ENCODE measurements at regions of chr9 and their contacts with region 1.

Region 1: GRCh38 chr9:129177791-129178559 is at the start of gene IER5L:
- DNase-seq: peak; percentile 90
- H3K4me3 ChIP-seq: peak within 1 kb of the TSS; percentile 74 to 81 (median 79)
- H3K27ac ChIP-seq: no peak within 1 kb of the TSS
- H3K4me1 ChIP-seq: peaks cover 21% of the 10 kb centered on the region
- H3K27me3 ChIP-seq: no peaks in the 10 kb centered on the region
- CTCF ChIP-seq: no peak
- POLR2A ChIP-seq: peak; percentile 100
- total RNA-seq, gene IER5L: 12.3 and 13.3 TPM in 2 replicates

Region 2: DNA sequence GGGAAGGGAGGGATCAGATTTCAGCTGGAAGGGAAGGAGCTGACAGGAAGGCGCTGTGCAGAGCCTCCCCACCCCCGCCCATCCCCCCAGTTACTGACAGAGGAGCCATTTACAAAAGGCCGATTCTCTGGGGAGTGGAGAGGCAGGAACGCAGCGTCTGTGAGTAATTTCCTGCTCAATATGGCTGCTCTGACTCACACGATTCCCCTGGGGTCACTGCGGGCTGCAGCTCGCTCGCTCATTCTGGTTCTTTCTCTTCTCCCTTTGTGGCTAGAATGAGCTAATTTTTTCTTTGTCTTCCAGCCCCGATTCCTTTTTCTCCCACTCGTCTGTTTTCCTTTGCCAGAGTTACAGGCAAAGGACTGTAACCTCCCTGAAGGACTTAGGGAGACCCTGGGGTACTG is 38.0 kb before region 1 on chr9:
- CTCF ChIA-PET with region 1: interaction called, 287 read pairs
- POLR2A ChIA-PET with region 1: interaction called, 39 read pairs
- dilution Hi-C with region 1: no loop called
- intact Hi-C with region 1: loop called (anchors 1 kb)
- DNase-seq: peak; percentile 98
- H3K4me3 ChIP-seq: peak overlapping the region in 1 of 3 experiments; percentile 31
- H3K27ac ChIP-seq: peak overlapping the region; percentile 99
- H3K4me1 ChIP-seq: peaks cover 55% of the 10 kb centered on the region
- H3K27me3 ChIP-seq: no peaks in the 10 kb centered on the region
- CTCF ChIP-seq: no peak
- POLR2A ChIP-seq: peak; percentile 85

Region 3: DNA sequence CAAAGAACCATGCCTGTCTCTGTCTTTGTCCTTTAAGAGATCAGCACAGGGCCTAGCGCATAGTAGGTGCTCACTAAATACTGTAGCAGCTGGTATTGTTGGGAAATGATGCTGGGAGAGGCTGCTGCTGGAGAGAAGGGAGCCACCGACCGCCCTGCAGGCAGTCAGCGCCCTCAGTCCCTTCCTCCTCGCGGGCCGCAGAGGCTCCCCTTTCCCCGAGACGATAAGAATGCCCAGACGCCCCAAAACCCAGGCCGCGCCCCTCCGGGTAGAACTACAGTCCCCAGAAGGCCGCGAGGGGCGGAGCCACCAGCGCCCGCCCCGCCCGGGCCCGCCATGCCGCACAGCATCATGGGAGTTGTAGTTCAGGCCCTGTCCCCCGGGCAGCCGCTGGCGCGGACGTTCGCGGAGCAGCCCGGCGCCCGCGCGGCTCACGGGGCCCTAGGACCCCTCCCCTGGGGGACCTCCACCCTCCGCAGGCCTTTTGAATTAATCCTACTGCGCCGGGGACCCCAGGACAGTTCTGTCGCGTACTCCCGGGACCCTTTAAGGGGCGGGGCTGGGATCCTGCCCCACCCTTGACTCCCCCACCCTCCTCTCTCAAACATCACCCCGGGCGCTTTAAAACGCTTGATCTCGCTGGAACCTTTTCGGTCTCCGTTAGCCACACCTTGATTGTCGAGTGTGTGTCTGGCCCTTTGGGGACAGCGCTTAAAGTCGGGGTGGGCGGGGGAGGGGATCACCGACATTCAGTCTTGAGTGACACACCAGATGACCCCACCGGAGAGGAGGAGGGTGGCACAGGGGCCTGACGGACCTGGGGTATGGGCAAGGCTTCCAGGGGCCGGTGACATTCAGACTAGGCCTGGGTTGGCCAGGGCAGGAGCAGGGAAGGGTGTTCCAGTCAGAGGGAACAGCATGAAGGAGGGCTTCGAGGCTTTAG is 24.9 kb after region 1 on chr9:
- CTCF ChIA-PET with region 1: interaction called, 5 read pairs
- POLR2A ChIA-PET with region 1: interaction called, 12 read pairs
- dilution Hi-C with region 1: no loop called
- intact Hi-C with region 1: no loop called
- DNase-seq: peak; percentile 72
- H3K4me3 ChIP-seq: peak overlapping the region; percentile 59 to 81 (median 62)
- H3K27ac ChIP-seq: peak overlapping the region; percentile 71
- H3K4me1 ChIP-seq: peaks cover 6% of the 10 kb centered on the region
- H3K27me3 ChIP-seq: no peaks in the 10 kb centered on the region
- CTCF ChIP-seq: no peak
- POLR2A ChIP-seq: no peak

Region 4: DNA sequence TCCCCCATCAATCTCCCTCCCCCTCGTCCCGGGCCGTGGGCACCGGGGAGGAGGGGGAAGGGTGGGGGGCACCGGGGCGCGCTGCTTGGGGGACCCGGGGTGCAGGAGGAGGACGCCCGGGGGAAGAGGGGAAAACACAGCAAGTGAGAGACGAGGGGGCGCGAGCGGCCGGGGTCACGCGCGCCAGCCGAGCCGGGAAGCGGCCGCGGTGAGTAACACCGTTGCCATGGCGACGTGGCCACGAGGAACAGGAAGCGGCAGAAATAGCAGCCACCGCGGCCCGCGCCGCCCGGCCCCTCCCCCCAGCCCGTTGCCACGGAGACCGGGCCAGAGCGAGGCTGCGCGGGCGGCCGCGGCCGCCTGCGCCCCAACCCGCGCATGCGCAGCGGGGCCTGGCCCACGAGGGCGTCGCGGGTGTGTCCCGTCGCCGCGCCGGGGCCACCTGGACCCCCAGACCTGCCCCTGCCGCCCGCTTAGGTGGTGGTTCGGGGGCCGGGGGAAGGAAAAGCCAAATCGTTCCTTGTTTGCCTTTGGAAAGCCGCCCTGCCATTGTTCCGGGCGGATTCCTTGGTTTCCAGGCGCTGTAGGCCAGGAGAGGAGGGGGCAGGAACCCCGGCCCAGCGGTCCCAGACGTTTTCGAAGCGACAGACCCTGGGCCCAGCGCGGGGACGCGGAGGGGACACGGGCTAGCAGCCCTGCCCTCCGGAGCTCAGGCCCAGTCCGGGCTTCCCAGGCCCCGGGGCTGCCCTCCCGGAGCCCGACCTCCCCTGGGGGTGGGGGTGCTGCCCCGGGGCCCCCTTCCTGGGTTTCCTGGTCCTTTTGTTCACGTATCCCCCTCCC is 235.8 kb after region 1 on chr9:
- CTCF ChIA-PET with region 1: no interaction called
- POLR2A ChIA-PET with region 1: no interaction called
- dilution Hi-C with region 1: no loop called
- intact Hi-C with region 1: loop called (anchors 2 kb)
- DNase-seq: peak; percentile 95
- H3K4me3 ChIP-seq: peak overlapping the region in 1 of 3 experiments; percentile 35
- H3K27ac ChIP-seq: peak overlapping the region; percentile 96
- H3K4me1 ChIP-seq: peaks cover 15% of the 10 kb centered on the region
- H3K27me3 ChIP-seq: no peaks in the 10 kb centered on the region
- CTCF ChIP-seq: no peak
- POLR2A ChIP-seq: peak; percentile 70

Region 5: GRCh38 chr9:129495534-129496325 is 317.8 kb after region 1 on chr9:
- CTCF ChIA-PET with region 1: interaction called, 14 read pairs
- POLR2A ChIA-PET with region 1: interaction called, 24 read pairs
- dilution Hi-C with region 1: no loop called
- intact Hi-C with region 1: loop called (anchors 1 kb)
- DNase-seq: peak; percentile 85
- H3K4me3 ChIP-seq: peak overlapping the region in 2 of 3 experiments; percentile 26 to 37
- H3K27ac ChIP-seq: peak overlapping the region; percentile 72
- H3K4me1 ChIP-seq: peaks cover 31% of the 10 kb centered on the region
- H3K27me3 ChIP-seq: no peaks in the 10 kb centered on the region
- CTCF ChIP-seq: no peak
- POLR2A ChIP-seq: no peak

Region 6: DNA sequence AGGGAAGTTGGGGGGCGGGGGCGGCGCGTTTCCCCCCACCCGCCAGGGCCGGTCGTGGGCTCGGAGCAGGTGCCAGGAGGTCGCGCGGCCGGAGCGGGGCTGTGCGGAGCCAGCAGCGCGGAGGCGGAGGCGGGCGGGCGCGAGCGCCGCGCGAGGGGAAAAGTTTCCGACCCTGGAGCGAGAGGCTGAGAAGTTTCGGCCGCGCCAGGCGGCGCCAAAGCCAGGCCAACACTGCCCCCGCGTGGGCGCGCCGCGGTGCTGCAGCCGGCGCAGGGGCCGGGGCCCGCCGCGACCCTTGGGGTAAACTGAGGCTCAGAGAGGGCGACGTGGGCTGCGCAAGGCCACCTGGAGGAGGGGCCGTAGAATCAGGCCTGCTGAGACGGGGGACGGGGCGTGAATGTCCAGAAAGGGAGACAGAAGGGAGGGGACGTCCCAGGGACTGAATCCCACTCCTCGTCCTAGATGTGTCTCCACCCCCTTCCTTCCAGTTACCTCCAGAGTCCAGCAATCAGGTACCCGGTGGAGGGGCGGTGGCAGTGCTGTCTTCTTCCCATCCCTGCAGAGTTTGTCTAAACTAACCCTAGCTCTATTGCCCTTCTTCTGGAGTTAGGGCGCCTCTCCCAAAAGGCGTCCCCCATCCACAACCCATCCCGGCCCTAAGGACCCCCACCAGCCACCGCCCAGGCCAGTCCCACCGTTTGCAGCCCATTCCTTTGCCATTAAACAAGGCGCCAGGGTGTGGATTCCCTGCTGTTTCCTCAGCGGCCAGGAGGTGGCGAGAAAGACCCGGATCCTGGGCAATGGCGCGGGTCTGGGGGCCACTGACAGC is 432.7 kb after region 1 on chr9:
- CTCF ChIA-PET with region 1: interaction called, 18 read pairs
- POLR2A ChIA-PET with region 1: interaction called, 4 read pairs
- dilution Hi-C with region 1: no loop called
- intact Hi-C with region 1: loop called (anchors 1 kb)
- DNase-seq: peak; percentile 64
- H3K4me3 ChIP-seq: peak overlapping the region; percentile 24 to 56 (median 46)
- H3K27ac ChIP-seq: peak overlapping the region; percentile 16
- H3K4me1 ChIP-seq: peaks cover 14% of the 10 kb centered on the region
- H3K27me3 ChIP-seq: peaks cover 0 to 5% of the 10 kb centered on the region in 2 experiments
- CTCF ChIP-seq: peak; percentile 86 to 96
- POLR2A ChIP-seq: no peak

Region 7: DNA sequence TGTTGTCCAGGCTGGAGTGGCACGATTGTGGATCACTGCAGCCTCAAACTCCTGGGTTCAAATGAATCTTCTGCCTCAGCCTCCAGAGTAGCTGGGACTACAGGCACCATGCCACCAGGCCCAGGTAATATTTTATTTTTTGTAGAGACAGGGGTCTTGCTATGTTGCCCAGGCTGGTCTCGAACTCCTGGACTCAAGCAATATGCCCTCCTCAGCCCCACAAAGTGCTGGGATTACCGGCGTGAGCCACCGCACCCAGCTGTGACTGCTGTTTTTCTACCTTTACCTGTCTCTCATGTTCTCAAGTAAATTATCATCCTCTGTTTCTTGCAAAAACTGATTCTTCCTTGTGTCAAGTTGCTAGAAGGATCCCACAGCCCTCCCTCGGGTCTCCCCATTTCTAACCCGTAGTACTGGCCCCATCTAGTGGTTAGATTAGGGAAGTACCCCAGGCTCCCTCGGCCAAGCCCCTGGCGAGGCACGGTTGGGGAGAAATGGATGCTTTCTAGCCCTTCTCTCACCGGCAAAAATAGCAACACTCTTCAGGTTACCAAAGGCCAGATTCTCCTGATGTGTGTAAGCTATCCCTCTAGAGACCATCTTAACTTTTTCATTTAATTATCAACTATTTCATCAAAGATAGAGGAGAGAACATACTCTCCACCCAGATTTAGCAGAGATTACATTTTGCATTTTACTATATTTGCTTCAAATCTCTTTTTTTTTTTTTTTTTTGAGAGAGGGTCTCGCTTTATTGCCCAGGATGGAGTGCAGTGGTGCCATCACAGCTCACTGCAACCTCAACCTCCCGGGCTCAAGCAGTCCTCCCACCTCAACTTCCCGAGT is 605.8 kb after region 1 on chr9:
- CTCF ChIA-PET with region 1: no interaction called
- POLR2A ChIA-PET with region 1: no interaction called
- dilution Hi-C with region 1: no loop called
- intact Hi-C with region 1: no loop called
- DNase-seq: peak; percentile 62
- H3K4me3 ChIP-seq: no peak overlapping the region
- H3K27ac ChIP-seq: no peak overlapping the region
- H3K4me1 ChIP-seq: no peaks in the 10 kb centered on the region
- H3K27me3 ChIP-seq: peaks cover 0 to 2% of the 10 kb centered on the region in 2 experiments
- CTCF ChIP-seq: peak; percentile 81 to 84
- POLR2A ChIP-seq: no peak

Measured in endothelial cell of umbilical vein (primary cell).